ENCODE measurements at regions of chr7 and their contacts with region 1.

Region 1: DNA sequence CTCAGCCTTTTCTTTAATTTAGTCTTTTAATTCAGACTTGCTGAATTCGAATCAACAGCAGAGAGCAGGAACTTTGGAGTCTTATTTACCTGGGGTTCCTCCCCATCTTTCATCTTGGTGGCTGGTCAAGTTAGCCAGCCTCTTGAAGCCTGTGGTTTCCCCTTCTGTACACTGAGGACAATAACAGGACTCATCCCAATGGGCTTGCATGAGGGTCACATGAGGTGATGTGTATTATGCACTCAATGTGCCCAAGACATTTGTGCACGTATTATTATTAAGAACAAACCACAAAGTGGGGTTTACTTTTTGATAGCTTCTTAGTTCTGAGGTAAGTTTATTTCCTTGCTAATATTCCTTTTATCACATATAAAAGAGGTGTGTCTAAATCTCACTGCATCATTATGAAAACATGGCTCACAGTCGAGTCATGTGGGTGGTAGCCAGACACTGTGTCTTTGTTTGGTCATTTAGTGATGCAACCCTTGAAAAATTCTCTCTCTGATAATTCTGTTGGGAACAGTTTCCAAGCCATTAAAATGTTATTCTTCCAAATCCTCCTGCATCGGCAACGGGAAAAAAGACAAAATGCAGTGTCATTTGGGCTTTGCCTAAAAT is 86.5 kb upstream of the GRB10 start:
- DNase-seq: peak in 1 of 2 donors; percentile 79
- H3K4me3 ChIP-seq: no peak overlapping the region
- H3K27ac ChIP-seq: peak overlapping the region in 1 of 2 donors; percentile 21
- H3K4me1 ChIP-seq: peaks cover 0 to 10% of the 10 kb centered on the region in 2 donors
- H3K27me3 ChIP-seq: no peaks in the 10 kb centered on the region
- CTCF ChIP-seq: no peak

Region 2: DNA sequence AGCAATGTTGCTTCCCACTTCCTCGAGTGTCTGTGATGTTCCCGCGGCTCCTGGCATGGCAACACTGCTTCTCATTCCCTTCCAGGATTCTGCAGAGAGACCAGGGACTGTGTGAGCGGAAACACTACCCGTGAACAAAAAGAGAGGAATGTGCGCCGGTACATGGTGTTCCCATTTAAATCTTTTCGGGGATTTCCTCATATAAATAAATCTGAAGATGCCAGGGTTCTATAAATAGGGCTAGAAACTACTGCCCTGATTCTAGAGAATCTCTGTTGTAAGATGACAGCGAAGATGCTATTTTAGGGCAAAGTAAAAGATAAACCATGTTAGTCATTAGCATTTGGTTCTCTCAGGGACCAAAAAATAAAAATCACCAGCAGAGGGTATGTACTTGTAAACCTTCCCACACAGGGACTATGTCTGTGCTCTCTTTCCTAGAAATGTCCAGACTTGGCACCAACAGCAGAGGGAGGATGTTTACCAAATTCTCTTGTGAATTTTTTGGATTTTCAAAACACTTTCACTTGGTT is 211.8 kb before region 1 on chr7:
- intact Hi-C with region 1: loop called (anchors 5 kb)
- DNase-seq: peak; percentile 63 to 93
- H3K4me3 ChIP-seq: peak overlapping the region in 1 of 2 donors; percentile 17
- H3K27ac ChIP-seq: peak overlapping the region; percentile 88 to 90
- H3K4me1 ChIP-seq: peaks cover 12 to 72% of the 10 kb centered on the region in 2 donors
- H3K27me3 ChIP-seq: no peaks in the 10 kb centered on the region
- CTCF ChIP-seq: peak in 2 of 3 experiments; percentile 19 to 28

Region 3: DNA sequence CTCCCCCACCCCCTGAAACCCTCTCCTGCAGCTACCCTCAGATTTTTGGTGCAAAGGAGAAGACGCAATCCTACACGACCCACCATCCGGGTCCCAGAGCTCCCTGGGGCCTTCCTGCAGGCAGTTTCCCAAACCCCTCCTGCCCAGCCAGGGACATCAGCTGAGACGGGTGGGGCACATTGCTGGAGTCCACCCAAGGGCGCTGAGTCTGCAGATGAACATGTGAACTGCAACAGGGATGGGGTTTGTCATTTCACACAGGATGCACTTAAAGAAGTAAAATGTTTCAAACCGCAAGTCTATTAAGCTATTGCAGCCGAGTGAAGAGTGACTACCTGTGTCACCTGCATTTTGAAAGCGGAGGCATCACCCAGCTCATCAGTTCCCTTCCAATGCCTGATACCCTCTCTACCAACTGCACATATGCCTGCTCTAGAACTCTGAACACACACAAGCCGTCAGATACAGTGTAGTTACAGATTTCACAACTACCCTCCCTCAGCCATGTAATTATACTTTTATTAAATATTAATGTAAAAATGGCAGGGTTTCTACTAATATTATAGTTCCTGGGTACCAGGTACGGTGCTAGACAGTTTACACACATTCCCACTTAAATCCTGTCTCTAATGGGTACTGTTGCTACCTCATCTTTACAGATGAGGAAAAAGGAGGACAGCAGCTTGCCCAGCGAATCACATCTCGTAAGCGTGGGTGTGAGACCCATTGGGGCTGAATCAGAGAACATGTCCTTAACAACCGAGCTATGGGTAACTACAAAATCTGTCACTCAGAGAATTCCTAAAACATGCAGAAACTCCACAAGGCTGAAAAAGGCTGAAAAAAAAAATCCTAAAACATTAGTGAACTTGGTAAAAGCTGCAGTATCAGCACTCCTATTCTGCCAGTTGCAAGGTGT is 157.7 kb before region 1 on chr7:
- intact Hi-C with region 1: loop called (anchors 5 kb)
- DNase-seq: no peak
- H3K4me3 ChIP-seq: no peak overlapping the region
- H3K27ac ChIP-seq: peak overlapping the region; percentile 60 to 72
- H3K4me1 ChIP-seq: peaks cover 4 to 50% of the 10 kb centered on the region in 2 donors
- H3K27me3 ChIP-seq: no peaks in the 10 kb centered on the region
- CTCF ChIP-seq: no peak

Region 4: GRCh38 chr7:50793115-50793946 is 75.9 kb before region 1 on chr7:
- intact Hi-C with region 1: loop called (anchors 2 kb)
- DNase-seq: peak in 1 of 2 donors; percentile 80
- H3K4me3 ChIP-seq: peak overlapping the region; percentile 63 to 87
- H3K27ac ChIP-seq: peak overlapping the region; percentile 77 to 82
- H3K4me1 ChIP-seq: peaks cover 5 to 21% of the 10 kb centered on the region in 2 donors
- H3K27me3 ChIP-seq: no peaks in the 10 kb centered on the region
- CTCF ChIP-seq: no peak

Region 5: DNA sequence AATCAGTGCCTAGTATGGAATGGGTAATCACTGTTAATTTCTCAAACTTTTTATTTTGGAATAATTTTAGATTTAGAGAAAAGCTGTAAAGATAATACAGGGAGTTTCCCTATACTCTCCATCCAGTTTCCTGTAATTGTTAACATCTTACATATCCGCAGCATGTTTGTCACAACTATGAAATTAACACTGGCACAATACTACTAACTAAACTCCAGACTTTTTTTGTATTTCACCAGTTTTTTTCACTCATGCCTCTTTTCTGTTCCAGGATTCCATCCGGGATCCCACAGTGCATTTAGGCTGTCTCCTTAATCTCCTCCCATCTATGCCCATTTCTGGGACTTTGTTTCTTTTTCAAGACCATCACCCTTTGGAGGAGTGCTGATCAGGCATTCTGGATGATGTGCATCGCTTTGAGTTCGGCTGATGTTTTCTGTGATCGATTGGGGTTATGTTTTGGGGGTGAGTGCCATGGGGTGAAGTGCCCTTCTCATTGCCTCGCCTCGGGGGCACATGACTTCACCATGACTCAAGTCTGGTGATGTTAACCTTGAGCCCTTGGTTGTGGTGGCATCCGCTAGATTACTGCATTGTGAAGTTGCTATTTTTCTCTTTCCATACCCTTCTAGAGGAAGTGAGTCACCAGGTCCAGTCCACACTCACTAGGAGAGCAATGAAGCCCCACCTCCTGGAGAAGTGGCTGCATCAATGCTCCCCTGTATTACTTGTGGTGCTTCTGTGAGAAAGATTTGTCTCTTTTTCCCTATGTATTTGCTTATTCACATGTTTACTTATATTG is 42.6 kb before region 1 on chr7:
- intact Hi-C with region 1: loop called (anchors 5 kb)
- DNase-seq: peak in 1 of 2 donors; percentile 66
- H3K4me3 ChIP-seq: no peak overlapping the region
- H3K27ac ChIP-seq: no peak overlapping the region
- H3K4me1 ChIP-seq: no peaks in the 10 kb centered on the region
- H3K27me3 ChIP-seq: no peaks in the 10 kb centered on the region
- CTCF ChIP-seq: peak in 1 of 3 experiments; percentile 16

Region 6: DNA sequence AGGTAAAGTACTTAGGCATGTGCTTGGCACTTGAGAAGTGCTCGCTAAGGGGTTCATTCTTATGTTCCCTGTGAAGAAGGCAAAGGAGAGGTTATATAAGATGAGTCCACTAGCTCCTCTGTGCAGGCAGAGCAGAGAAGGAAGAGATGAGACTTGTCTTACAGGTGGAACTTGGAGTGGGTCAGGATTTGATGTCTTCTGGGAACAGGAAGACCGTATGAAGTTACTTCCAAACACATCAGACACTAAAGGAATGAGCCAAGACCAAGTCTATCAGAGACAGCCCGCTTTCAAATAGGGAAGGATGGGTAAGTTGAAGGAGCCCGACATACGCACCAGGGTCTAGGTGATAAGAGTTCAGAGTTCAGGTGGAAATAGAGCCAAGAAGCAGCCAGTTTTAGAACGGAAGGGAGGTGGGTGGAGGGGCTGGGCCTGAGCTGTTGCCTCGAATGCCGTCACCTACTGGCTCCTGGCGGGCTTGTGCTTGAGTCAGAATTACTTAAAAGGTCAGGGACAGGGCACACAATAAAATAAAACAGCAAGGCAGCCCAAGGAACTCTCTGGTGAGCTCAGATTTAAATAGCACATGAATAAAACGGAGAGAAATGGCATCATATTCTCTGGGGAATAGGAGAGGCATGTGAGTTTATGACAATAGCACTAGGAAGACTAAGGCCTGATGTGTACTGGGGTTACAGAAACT is 30.4 kb before region 1 on chr7:
- intact Hi-C with region 1: loop called (anchors 1 kb)
- DNase-seq: peak; percentile 56 to 92
- H3K4me3 ChIP-seq: no peak overlapping the region
- H3K27ac ChIP-seq: peak overlapping the region; percentile 84 to 90
- H3K4me1 ChIP-seq: peaks cover 8 to 18% of the 10 kb centered on the region in 2 donors
- H3K27me3 ChIP-seq: no peaks in the 10 kb centered on the region
- CTCF ChIP-seq: no peak